ENCODE measurements at regions of chr14 and their contacts with region 1.

Region 1: GRCh38 chr14:76962303-76962660 is 66.2 kb downstream of the IRF2BPL start:
- DNase-seq: no peak
- ATAC-seq: no peak
- H3K4me3 Mint-ChIP-seq: peak overlapping the region; percentile 84
- H3K27ac Mint-ChIP-seq: peak overlapping the region; percentile 94
- H3K4me1 Mint-ChIP-seq: peaks cover 78% of the 10 kb centered on the region
- H3K27me3 Mint-ChIP-seq: no peaks in the 10 kb centered on the region
- CTCF ChIP-seq: no peak

Region 2: DNA sequence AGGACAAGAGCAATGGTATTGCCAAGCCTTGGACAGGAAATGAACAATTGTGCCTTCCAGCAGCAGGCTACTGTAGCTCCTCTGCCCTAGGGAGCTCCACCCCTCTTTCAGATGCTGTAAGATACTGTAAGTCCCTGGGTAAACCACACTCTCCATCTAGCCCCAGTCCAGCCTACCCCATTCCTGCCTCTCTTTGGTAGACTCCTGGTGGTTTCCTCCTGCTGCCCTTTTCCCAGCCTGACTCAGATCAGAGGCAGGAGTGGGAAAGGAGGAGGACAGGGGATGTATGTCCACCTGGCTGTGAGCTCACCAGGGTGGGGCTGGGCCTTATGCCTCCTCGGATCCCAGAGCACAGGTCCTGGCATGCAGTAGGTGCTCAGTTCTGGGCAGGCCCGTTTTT is 411.7 kb before region 1 on chr14:
- CTCF ChIA-PET with region 1: no interaction called
- POLR2A ChIA-PET with region 1: no interaction called
- intact Hi-C with region 1: no loop called
- DNase-seq: no peak
- ATAC-seq: no peak
- H3K4me3 Mint-ChIP-seq: no peak overlapping the region
- H3K27ac Mint-ChIP-seq: no peak overlapping the region
- H3K4me1 Mint-ChIP-seq: no peaks in the 10 kb centered on the region
- H3K27me3 Mint-ChIP-seq: peaks cover 2% of the 10 kb centered on the region
- CTCF ChIP-seq: no peak

Region 3: GRCh38 chr14:76918751-76919543 is 43.3 kb before region 1 on chr14:
- CTCF ChIA-PET with region 1: interaction called, 22 read pairs
- POLR2A ChIA-PET with region 1: interaction called, 3 read pairs
- intact Hi-C with region 1: no loop called
- DNase-seq: no peak
- ATAC-seq: no peak
- H3K4me3 Mint-ChIP-seq: no peak overlapping the region
- H3K27ac Mint-ChIP-seq: no peak overlapping the region
- H3K4me1 Mint-ChIP-seq: peaks cover 25% of the 10 kb centered on the region
- H3K27me3 Mint-ChIP-seq: peaks cover 15% of the 10 kb centered on the region
- CTCF ChIP-seq: no peak

Region 4: DNA sequence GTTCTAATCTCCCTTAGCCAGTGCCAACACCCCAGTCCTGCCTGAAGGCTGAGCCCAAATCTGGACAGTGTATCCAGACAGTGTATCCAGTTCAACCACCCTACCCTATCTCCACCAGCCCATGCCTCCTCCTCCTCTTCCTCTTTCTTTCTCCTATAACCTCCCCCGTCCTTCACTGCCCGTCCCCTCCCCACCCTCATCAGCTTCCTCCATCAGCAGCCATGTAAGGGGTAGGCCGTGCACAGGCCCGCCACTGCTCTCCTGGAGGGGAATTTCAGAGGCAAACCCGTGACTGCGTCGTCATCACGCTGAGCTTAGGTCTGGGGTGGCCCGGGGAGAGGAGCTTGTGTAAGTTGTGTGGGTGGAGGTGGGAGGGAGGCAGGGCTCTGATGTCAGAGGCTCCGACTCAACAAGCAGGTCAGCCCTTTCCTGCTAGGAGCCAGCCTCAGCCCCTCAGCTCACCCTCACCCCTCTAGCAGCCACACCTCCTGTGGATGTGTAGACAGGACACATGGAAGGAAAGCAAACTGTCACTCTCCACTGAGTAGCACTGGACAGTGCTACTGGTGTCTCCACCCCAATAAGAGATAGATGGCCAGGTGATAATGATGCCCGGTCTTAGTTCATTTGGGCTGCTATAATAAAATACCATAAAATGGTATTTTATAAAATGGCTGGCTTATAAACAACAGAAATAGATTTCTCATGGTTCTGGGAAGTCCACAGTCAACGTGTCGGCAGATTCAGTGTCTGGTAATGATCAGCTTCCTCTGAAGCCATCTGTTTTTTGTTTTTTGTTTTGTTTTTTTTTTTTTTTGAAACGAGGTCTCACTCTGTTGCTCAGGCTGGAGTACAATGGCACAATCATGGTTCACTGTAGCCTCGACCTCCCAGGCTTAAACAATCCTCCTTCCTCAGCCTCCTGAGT is 15.8 kb after region 1 on chr14:
- CTCF ChIA-PET with region 1: interaction called, 5 read pairs
- POLR2A ChIA-PET with region 1: interaction called, 65 read pairs
- intact Hi-C with region 1: loop called (anchors 1 kb)
- DNase-seq: peak; percentile 74
- ATAC-seq: peak; percentile 96
- H3K4me3 Mint-ChIP-seq: peak overlapping the region; percentile 63
- H3K27ac Mint-ChIP-seq: peak overlapping the region; percentile 88
- H3K4me1 Mint-ChIP-seq: peaks cover 31% of the 10 kb centered on the region
- H3K27me3 Mint-ChIP-seq: no peaks in the 10 kb centered on the region
- CTCF ChIP-seq: no peak

Region 5: DNA sequence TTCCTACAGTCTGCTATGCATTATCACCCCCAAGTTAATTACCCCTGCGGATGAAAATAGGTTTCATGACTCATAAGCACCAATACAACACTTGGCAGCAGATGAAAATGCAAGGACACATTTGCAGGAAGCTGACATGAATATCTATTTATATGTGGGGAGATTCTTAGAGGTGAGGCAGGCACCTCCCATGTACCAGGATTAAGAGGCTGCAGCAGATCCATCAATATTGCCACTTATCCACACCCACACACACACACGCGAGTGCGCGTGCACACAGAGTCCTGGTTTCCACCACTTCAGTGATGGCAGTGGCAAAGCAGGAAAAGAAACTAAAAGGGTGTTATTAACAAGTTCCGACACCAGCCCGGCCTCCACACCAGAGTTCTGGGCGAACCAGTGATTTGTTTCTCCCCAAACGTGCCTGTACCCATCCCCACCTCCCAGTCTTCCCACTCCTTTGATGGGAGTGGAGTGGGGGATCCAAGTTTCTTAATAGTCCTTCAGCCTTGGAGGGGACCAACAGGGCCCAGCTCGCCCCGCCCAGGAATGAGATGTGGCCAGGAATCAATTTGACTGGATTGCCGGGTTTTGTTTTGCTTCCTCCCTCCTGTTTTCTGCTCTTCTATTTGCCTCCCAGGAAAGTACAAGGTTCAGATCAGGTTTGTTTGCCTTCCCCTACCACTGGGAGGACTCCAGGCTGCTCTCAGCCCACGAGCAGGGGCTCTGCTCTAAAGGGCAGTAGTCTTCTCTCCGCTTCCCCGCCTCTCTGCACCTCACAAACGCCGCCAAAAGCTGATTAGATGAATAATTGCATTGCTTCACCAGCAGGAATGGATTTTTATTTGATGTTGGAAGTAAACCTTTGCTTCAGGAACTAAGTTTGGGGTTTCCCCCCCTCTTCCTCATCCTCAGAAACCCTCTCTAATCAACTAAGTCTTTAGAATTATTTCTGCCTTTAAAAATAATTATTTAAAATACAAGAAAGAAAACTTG is 61.0 kb after region 1 on chr14:
- CTCF ChIA-PET with region 1: interaction called, 10 read pairs
- POLR2A ChIA-PET with region 1: interaction called, 149 read pairs
- intact Hi-C with region 1: loop called (anchors 1 kb)
- DNase-seq: no peak
- ATAC-seq: no peak
- H3K4me3 Mint-ChIP-seq: no peak overlapping the region
- H3K27ac Mint-ChIP-seq: peak overlapping the region; percentile 4
- H3K4me1 Mint-ChIP-seq: peaks cover 36% of the 10 kb centered on the region
- H3K27me3 Mint-ChIP-seq: no peaks in the 10 kb centered on the region
- CTCF ChIP-seq: no peak

Region 6: GRCh38 chr14:77053046-77053841 is 91.0 kb after region 1 on chr14:
- CTCF ChIA-PET with region 1: interaction called, 10 read pairs
- POLR2A ChIA-PET with region 1: interaction called, 7 read pairs
- intact Hi-C with region 1: loop called (anchors 1 kb)
- DNase-seq: peak; percentile 79
- ATAC-seq: peak; percentile 90
- H3K4me3 Mint-ChIP-seq: no peak overlapping the region
- H3K27ac Mint-ChIP-seq: peak overlapping the region; percentile 24
- H3K4me1 Mint-ChIP-seq: peaks cover 8% of the 10 kb centered on the region
- H3K27me3 Mint-ChIP-seq: no peaks in the 10 kb centered on the region
- CTCF ChIP-seq: peak; percentile 74

Region 7: GRCh38 chr14:77086017-77086736 is 123.9 kb after region 1 on chr14:
- CTCF ChIA-PET with region 1: no interaction called
- POLR2A ChIA-PET with region 1: no interaction called
- intact Hi-C with region 1: no loop called
- DNase-seq: no peak
- ATAC-seq: peak; percentile 81
- H3K4me3 Mint-ChIP-seq: no peak overlapping the region
- H3K27ac Mint-ChIP-seq: peak overlapping the region; percentile 26
- H3K4me1 Mint-ChIP-seq: peaks cover 22% of the 10 kb centered on the region
- H3K27me3 Mint-ChIP-seq: no peaks in the 10 kb centered on the region
- CTCF ChIP-seq: no peak

Region 8: GRCh38 chr14:77400219-77400618 is 437.9 kb after region 1 on chr14:
- CTCF ChIA-PET with region 1: no interaction called
- POLR2A ChIA-PET with region 1: no interaction called
- intact Hi-C with region 1: no loop called
- DNase-seq: no peak
- ATAC-seq: no peak
- H3K4me3 Mint-ChIP-seq: no peak overlapping the region
- H3K27ac Mint-ChIP-seq: no peak overlapping the region
- H3K4me1 Mint-ChIP-seq: no peaks in the 10 kb centered on the region
- H3K27me3 Mint-ChIP-seq: no peaks in the 10 kb centered on the region
- CTCF ChIP-seq: no peak

Measured in activated B cell treated with CpG ODN at 0.5 μM for 24 hours (primary cell).